Activated CD4-positive, alpha-beta T cell treated with anti-CD3 and anti-CD28 coated beads, Interleukin-2, amount 10 ng/mL, durations not matched to agents 7 days and 5 days (primary cell): ENCODE measurements at regions of chr3 and their contacts with region 1.

Region 1: GRCh38 chr3:186540221-186540834 is 3.9 kb downstream of the CRYGS start:
- DNase-seq: peak; percentile 87
- H3K4me3 Mint-ChIP-seq: no peak overlapping the region
- H3K27ac Mint-ChIP-seq: no peak overlapping the region
- H3K4me1 Mint-ChIP-seq: peaks cover 19% of the 10 kb centered on the region
- H3K27me3 Mint-ChIP-seq: no peaks in the 10 kb centered on the region

Region 2: DNA sequence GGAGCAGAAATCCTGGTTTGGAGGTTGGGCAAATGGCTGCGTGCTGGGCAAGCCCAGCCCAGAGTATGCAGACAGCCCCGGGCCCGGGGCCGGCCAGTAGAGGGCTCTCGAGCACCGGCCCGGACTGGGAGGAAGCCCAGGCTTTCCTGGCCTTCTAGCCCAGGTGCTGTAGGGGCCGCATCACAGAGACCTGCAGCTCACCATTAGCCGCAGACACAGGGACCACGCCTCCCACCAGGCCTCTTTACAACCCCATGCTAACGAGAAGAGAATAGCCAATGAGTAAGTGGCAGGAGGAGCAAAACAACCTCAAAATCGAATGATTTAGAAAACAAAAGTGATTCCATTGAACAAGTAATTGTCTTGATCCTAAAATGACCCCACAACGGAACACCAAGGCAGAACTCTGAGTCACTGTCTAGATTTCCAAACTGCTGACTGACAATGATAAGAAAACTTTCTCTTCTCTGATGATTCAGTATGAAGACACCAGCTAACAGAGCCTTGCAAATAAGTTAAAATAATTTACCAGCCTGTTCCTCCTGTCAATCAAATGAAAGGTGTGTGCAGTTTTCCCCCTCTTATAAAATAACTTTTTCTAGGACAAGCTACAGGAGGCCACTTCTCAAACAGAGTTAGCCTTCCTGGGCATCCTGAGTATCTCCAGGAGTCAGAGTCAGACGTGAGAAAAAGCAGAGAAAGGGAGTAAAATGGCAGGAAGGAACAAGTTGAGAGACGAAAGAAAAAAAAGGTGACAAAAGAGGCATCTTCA is 280.5 kb before region 1 on chr3:
- CTCF ChIA-PET with region 1: interaction called, 40 read pairs
- POLR2A ChIA-PET with region 1: no interaction called
- DNase-seq: peak; percentile 56
- H3K4me3 Mint-ChIP-seq: no peak overlapping the region
- H3K27ac Mint-ChIP-seq: no peak overlapping the region
- H3K4me1 Mint-ChIP-seq: peaks cover 8% of the 10 kb centered on the region
- H3K27me3 Mint-ChIP-seq: no peaks in the 10 kb centered on the region

Region 3: DNA sequence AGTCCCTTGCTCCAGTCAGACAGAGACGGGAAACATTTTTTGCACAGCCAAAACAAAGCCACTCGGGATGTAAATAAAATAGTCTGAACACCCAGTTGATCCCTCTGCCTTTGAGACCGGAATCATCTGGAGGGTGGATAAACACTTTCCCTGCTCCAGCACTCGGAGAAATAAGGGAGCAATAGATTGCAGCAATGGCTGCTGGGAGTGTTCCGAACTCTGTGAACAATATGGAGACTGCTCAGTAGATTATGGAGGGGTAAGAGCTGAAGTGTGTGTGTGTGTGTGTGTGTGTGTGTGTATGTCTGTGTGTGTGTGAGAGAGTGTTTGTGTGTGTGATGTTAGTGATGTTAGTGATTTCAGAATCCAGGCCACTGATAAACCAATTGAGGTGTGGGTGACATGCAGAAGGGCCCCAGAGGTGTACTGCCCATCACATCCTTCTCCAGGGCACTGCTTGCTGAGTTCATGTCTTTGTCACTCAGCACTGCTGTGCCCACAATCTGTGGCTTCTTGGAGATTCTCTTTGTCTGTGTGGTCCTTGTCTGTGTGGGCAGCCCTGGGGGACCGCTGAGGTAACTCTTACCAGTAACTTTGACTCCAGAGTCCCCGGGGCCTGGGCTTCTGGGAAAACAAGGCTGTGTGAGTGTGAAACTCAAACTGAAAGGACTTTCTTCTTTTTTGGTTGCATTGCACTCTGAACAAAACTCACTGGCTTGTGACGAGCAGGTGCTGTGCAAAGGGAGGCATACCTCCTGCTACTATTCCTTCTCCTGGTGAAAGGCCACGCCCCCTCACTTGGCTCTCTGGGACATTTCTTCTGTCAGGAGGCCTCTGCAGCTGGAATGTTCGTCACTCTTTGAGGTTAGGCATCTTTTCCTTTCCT is 19.1 kb before region 1 on chr3:
- CTCF ChIA-PET with region 1: interaction called, 26 read pairs
- POLR2A ChIA-PET with region 1: no interaction called
- DNase-seq: no peak
- H3K4me3 Mint-ChIP-seq: no peak overlapping the region
- H3K27ac Mint-ChIP-seq: peak overlapping the region; percentile 4
- H3K4me1 Mint-ChIP-seq: peaks cover 49% of the 10 kb centered on the region
- H3K27me3 Mint-ChIP-seq: no peaks in the 10 kb centered on the region

Region 4: DNA sequence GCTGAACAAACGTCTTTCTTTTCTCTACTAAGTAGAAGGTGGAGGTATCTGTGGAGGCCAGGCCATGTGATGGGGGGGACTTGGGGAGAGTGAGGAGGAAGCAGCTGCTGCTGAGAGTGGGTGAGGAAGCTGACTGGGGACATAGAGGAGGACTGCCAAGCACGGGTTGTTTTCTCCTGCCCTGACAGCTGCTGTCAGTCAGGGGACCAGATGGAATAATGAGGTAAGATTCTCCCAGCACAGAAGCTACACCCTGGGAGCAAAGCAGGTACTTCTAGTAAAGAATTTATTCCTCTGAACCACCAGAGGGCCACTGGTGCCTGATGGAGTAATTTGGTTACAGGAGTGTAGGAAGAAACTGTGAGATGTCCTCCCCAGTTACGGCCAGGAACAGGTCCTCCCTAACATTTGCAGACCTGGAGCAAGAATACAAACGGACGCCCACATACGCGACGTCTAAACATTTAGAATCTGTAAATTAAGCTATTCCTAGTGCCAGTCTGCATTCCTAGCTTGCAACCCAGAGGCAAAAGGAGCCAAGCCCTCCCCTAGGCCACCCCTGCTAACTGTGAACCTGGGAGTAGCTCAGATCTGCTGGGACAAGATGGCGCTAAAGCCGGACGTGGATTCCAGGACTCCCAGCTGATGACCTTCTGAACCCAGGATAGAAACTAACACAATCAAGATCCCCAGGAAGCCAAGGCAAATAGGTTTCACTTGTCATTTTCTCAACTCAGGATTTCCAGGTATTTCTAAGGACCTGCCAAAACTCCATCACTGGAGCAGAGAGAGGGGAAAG is 10.9 kb before region 1 on chr3:
- CTCF ChIA-PET with region 1: interaction called, 12 read pairs
- POLR2A ChIA-PET with region 1: no interaction called
- DNase-seq: no peak
- H3K4me3 Mint-ChIP-seq: no peak overlapping the region
- H3K27ac Mint-ChIP-seq: no peak overlapping the region
- H3K4me1 Mint-ChIP-seq: peaks cover 23% of the 10 kb centered on the region
- H3K27me3 Mint-ChIP-seq: no peaks in the 10 kb centered on the region

Region 5: DNA sequence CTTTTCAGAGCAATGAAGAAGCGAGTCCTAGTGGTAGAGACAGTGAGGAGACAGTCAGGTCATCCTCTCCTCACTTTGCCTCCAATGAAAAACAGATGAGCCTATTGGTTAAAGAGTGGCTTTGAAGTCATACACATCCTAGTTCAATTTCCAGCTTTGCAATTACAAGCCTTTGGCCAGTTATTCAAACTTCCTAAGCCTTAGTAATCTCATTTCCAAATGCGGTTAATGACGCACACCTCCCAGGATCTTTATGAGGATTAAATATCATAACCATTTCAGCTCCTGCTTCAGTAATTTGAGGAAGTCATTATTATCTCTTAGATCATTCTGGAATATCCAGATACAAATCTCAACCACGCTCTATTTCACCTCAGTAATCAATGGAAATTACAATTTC is 380.0 kb after region 1 on chr3:
- CTCF ChIA-PET with region 1: no interaction called
- POLR2A ChIA-PET with region 1: no interaction called
- DNase-seq: no peak
- H3K4me3 Mint-ChIP-seq: no peak overlapping the region
- H3K27ac Mint-ChIP-seq: no peak overlapping the region
- H3K4me1 Mint-ChIP-seq: peaks cover 35% of the 10 kb centered on the region
- H3K27me3 Mint-ChIP-seq: no peaks in the 10 kb centered on the region